ENCODE measurements at regions of chr18 and their contacts with region 1.

Region 1: DNA sequence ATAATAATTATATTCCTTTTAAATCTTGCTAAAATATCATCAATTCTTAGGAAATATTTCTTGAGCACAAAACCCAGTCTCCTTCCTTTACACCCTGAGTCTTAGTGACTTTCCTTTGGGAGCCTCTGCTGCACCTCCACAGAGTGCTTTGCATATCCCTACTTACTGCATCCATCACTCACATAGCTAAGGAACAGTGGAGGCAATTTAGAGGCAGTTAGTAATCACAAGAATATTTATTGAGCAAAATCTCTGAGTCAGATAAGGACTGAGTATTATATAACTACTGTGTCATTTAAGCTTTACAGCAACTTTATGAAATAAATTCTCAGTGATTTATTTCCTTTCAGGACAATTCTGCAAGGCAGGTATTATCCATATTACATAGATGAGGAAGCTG is 327.7 kb downstream of the TMX3 start:
- DNase-seq: peak; percentile 25
- H3K4me3 ChIP-seq: no peak overlapping the region
- H3K27ac ChIP-seq: no peak overlapping the region
- H3K4me1 ChIP-seq: no peaks in the 10 kb centered on the region
- H3K27me3 ChIP-seq: no peaks in the 10 kb centered on the region
- CTCF ChIP-seq: no peak

Region 2: GRCh38 chr18:67893916-67894315 is 493.3 kb before region 1 on chr18:
- CTCF ChIA-PET with region 1: no interaction called
- dilution Hi-C with region 1: no loop called
- in situ Hi-C with region 1: no loop called
- intact Hi-C with region 1: no loop called
- DNase-seq: no peak
- H3K4me3 ChIP-seq: no peak overlapping the region
- H3K27ac ChIP-seq: no peak overlapping the region
- H3K4me1 ChIP-seq: no peaks in the 10 kb centered on the region
- H3K27me3 ChIP-seq: no peaks in the 10 kb centered on the region
- CTCF ChIP-seq: no peak

Region 3: DNA sequence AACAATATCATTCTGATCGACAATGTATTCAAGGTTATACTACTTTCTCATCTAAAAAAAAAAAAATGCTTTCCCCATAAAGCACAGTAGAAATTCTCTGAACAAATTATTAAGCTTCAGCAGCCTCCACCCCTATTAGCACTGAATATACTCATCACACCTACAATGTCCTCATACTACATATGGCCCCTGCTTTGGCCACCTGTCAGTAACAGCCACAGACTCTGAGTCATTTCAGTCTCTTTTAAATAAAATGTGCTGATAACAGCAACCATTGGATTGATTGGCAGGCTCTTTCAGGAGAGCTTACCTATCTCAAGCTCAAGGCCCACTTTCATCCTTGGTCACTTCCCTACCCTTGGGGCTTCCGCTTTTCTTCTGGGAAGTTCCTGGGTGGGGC is 91.0 kb after region 1 on chr18:
- CTCF ChIA-PET with region 1: no interaction called
- dilution Hi-C with region 1: no loop called
- in situ Hi-C with region 1: no loop called
- intact Hi-C with region 1: loop called (anchors 10 kb)
- DNase-seq: no peak
- H3K4me3 ChIP-seq: no peak overlapping the region
- H3K27ac ChIP-seq: no peak overlapping the region
- H3K4me1 ChIP-seq: no peaks in the 10 kb centered on the region
- H3K27me3 ChIP-seq: no peaks in the 10 kb centered on the region
- CTCF ChIP-seq: no peak

Measured in mammary epithelial cell (primary cell).